OCI-LY7 (cell line): ENCODE measurements at regions of chr13 and their contacts with region 1.

Region 1: DNA sequence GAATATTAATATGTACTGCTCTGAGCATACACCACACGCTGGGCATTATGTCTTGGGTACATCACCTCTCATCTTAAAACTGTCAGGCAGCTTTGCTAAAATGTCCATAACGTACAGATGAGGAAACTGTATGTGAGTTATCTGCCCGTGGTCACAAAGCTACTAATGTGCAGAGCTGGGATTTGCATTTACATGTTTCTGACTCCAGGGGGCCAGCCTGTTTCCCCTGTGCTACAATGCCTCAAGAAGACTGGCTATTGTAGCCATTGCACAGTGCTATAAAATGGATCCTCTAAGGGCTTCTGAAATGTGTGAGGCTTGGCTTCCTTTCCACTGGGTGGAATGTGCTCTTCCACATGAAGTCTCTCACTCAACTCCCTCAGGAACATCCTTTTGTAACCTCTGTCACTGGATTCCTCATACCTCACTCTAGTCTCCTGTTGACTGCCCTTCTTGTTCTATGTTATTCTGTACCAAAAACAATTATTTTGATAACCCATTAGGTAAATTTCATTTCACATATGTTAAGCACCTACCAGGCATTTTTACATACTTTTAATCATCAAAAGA is 95.6 kb upstream of the HTR2A start:
- DNase-seq: peak; percentile 64
- H3K4me3 ChIP-seq: no peak overlapping the region
- H3K27ac ChIP-seq: no peak overlapping the region
- H3K4me1 ChIP-seq: peaks cover 20% of the 10 kb centered on the region
- CTCF ChIP-seq: peak; percentile 77

Region 2: GRCh38 chr13:45546218-45546763 is 1446.2 kb before region 1 on chr13:
- CTCF ChIA-PET with region 1: no interaction called
- POLR2A ChIA-PET with region 1: no interaction called
- intact Hi-C with region 1: no loop called
- DNase-seq: no peak
- H3K4me3 ChIP-seq: no peak overlapping the region
- H3K27ac ChIP-seq: no peak overlapping the region
- H3K4me1 ChIP-seq: no peaks in the 10 kb centered on the region
- CTCF ChIP-seq: no peak

Region 3: GRCh38 chr13:47004027-47004426 is 11.6 kb after region 1 on chr13:
- CTCF ChIA-PET with region 1: no interaction called
- POLR2A ChIA-PET with region 1: interaction called, 10 read pairs
- intact Hi-C with region 1: no loop called
- DNase-seq: no peak
- H3K4me3 ChIP-seq: no peak overlapping the region
- H3K27ac ChIP-seq: no peak overlapping the region
- H3K4me1 ChIP-seq: no peaks in the 10 kb centered on the region
- CTCF ChIP-seq: no peak